ENCODE measurements at regions of chr13 and their contacts with region 1.

Region 1: DNA sequence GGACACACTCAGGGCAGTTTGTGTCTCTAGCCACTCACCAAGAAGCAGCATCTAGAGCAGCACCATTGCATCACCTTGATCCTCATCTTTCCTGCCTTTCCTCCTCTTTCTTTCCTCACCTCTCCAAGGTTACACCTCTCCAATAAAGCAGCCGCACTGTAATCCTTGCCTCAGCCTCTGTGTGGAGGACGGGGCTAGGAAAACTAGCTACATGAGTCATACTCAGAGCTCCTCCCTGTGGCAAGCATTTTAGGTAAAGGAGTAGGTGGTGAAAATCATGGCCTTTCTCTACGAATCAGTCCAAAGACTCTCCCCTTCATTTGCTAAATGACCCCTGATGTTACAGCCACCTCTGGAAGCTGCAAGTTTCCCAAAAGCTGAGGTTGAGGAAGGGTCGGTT is 108.9 kb downstream of the DNAJC15 start:
- DNase-seq: peak; percentile 66
- H3K4me3 ChIP-seq: no peak overlapping the region
- H3K27ac ChIP-seq: no peak overlapping the region
- H3K4me1 ChIP-seq: peaks cover 9% of the 10 kb centered on the region
- H3K27me3 ChIP-seq: no peaks in the 10 kb centered on the region
- CTCF ChIP-seq: peak; percentile 35 to 59

Region 2: GRCh38 chr13:43232874-43233266 is 100.6 kb after region 1 on chr13:
- CTCF ChIA-PET with region 1: no interaction called
- dilution Hi-C with region 1: loop called (anchors 5 kb)
- in situ Hi-C with region 1: no loop called
- intact Hi-C with region 1: no loop called
- DNase-seq: peak; percentile 39
- H3K4me3 ChIP-seq: no peak overlapping the region
- H3K27ac ChIP-seq: no peak overlapping the region
- H3K4me1 ChIP-seq: no peaks in the 10 kb centered on the region
- H3K27me3 ChIP-seq: no peaks in the 10 kb centered on the region
- CTCF ChIP-seq: no peak

Measured in mammary epithelial cell (primary cell).